ENCODE measurements at regions of chr6 and their contacts with region 1.

Region 1: GRCh38 chr6:69796642-69797390 is at the start of gene LMBRD1:
- DNase-seq: peak; percentile 95
- H3K4me3 Mint-ChIP-seq: peak within 1 kb of the TSS; percentile 85
- H3K27ac Mint-ChIP-seq: peak within 1 kb of the TSS; percentile 91
- H3K4me1 Mint-ChIP-seq: peaks cover 15% of the 10 kb centered on the region
- H3K27me3 Mint-ChIP-seq: no peaks in the 10 kb centered on the region
- CTCF ChIP-seq: peak; percentile 84
- total RNA-seq, gene LMBRD1: 18.1 and 20.7 TPM in 2 replicates

Region 2: DNA sequence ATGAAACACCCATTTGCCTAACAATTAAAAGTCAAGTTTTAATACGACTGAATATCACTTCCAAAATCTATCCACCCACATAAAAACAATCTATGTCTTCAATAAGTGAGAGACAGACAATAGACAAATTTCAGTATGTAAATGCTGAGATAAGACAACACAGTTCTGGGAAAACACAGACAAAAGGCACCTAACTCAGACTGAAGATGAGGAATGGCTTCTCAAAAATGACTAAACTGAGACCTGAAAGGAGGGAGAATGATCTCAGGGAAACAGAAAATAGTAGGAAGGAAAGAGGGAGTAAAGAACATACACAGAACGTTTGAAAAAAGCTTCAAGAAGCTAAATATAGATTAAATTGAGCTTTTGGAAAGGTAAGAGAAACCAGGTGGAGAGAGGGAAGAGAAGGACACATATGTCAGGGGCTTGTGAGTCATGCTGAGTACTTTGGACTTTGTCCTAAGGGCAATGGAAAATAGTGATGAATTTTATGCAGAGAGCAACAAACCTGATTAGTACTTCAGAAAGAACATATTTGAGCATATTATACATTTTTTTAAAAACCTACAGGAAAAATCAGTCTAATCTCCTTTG is 16.1 kb before region 1 on chr6:
- CTCF ChIA-PET with region 1: interaction called, 4 read pairs
- POLR2A ChIA-PET with region 1: interaction called, 13 read pairs
- intact Hi-C with region 1: no loop called
- DNase-seq: peak; percentile 38
- H3K4me3 Mint-ChIP-seq: no peak overlapping the region
- H3K27ac Mint-ChIP-seq: peak overlapping the region; percentile 3
- H3K4me1 Mint-ChIP-seq: peaks cover 7% of the 10 kb centered on the region
- H3K27me3 Mint-ChIP-seq: no peaks in the 10 kb centered on the region
- CTCF ChIP-seq: no peak

Region 3: GRCh38 chr6:70694371-70694770 is 897.6 kb after region 1 on chr6:
- CTCF ChIA-PET with region 1: no interaction called
- POLR2A ChIA-PET with region 1: no interaction called
- intact Hi-C with region 1: no loop called
- DNase-seq: no peak
- H3K4me3 Mint-ChIP-seq: no peak overlapping the region
- H3K27ac Mint-ChIP-seq: no peak overlapping the region
- H3K4me1 Mint-ChIP-seq: no peaks in the 10 kb centered on the region
- H3K27me3 Mint-ChIP-seq: no peaks in the 10 kb centered on the region
- CTCF ChIP-seq: no peak